ENCODE measurements at regions of chrX and their contacts with region 1.

Region 1: GRCh38 chrX:54439967-54440871 is at the start of gene TSR2:
- DNase-seq: peak; percentile 93
- H3K4me3 ChIP-seq: peak within 1 kb of the TSS; percentile 90
- H3K27ac ChIP-seq: peak within 1 kb of the TSS; percentile 66
- H3K4me1 ChIP-seq: peaks cover 5% of the 10 kb centered on the region; the same call in 1 of the 2 replicates
- H3K27me3 ChIP-seq: no peaks in the 10 kb centered on the region
- total RNA-seq, gene TSR2: 19.6 and 22.1 TPM in 2 replicates

Region 2: GRCh38 chrX:53900623-53901022 is 539.6 kb before region 1 on chrX:
- in situ Hi-C with region 1: no loop called
- DNase-seq: no peak
- H3K4me3 ChIP-seq: no peak overlapping the region
- H3K27ac ChIP-seq: no peak overlapping the region
- H3K4me1 ChIP-seq: no peaks in the 10 kb centered on the region
- H3K27me3 ChIP-seq: no peaks in the 10 kb centered on the region

Region 3: GRCh38 chrX:54044126-54044876 is 395.9 kb before region 1 on chrX and contains the start of gene PHF8:
- in situ Hi-C with region 1: loop called (anchors 25 kb)
- DNase-seq: peak; percentile 94
- H3K4me3 ChIP-seq: peak within 1 kb of the TSS; percentile 89
- H3K27ac ChIP-seq: peak within 1 kb of the TSS; percentile 90
- H3K4me1 ChIP-seq: no peaks in the 10 kb centered on the region
- H3K27me3 ChIP-seq: no peaks in the 10 kb centered on the region
- total RNA-seq, gene PHF8: 5.2 and 6.1 TPM in 2 replicates

Measured in GM23248 (cell line).